ENCODE measurements at regions of chr6 and their contacts with region 1.

Region 1: GRCh38 chr6:79170959-79171358 is 63.5 kb downstream of the HMGN3 start:
- DNase-seq: no peak
- H3K4me3 ChIP-seq: no peak overlapping the region
- H3K27ac ChIP-seq: no peak overlapping the region
- H3K4me1 ChIP-seq: no peaks in the 10 kb centered on the region
- H3K27me3 ChIP-seq: no peaks in the 10 kb centered on the region
- CTCF ChIP-seq: no peak

Region 2: DNA sequence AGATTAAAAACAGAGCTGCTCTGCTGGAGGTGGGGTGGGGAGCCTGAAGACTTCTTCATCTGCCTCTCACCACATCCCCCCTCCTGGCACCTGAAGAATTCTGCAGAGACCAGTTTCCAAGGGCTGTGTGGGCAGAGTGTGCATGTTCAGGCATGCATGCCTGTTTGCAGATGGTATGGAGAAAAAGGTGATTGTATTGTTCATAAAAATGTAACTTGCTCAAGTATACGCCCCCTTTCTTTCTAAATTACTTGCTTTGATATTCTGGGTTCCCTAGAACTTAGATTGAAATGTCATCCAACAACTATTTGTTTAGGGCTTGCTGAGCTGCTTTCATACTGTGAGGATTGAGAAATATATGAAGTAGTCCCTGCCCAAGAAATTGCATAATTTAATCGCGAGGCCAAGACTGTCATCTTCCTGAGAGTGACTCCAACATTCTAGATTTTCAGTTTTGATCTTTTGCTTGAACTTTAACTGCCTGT is 282.6 kb after region 1 on chr6:
- CTCF ChIA-PET with region 1: no interaction called
- POLR2A ChIA-PET with region 1: interaction called, 11 read pairs
- intact Hi-C with region 1: no loop called
- DNase-seq: peak; percentile 61 to 74
- H3K4me3 ChIP-seq: no peak overlapping the region
- H3K27ac ChIP-seq: no peak overlapping the region
- H3K4me1 ChIP-seq: peaks cover 14% of the 10 kb centered on the region; the same call in 1 of the 2 replicates
- H3K27me3 ChIP-seq: no peaks in the 10 kb centered on the region
- CTCF ChIP-seq: no peak

Measured in PC-9 (cell line).